Ascending aorta (tissue), 2 donors: ENCODE measurements at regions of chr13 and their contacts with region 1.

Region 1: DNA sequence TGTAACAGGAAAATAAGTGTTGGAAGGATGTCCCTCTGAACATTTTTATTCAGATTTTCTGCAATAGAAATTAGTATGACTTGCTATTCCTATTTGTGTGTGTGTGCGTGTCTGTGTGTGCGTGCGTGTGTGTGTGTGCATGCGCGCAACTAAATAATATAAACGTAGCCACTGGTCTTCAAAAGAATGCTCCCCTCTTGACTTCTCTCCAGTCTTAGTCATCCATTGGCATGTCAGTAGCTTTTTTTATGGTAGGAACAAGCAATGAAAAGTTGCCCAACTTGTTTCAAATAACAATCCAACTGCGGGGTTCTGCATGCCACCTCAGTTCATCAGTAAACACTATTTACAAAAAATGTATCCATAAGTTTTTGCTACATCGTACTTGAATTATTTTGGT is 249.6 kb downstream of the GPC6 start:
- DNase-seq: no peak
- H3K4me3 ChIP-seq: no peak overlapping the region
- H3K27ac ChIP-seq: no peak overlapping the region
- H3K4me1 ChIP-seq: peaks cover 0 to 3% of the 10 kb centered on the region in 2 donors
- H3K27me3 ChIP-seq: no peaks in the 10 kb centered on the region
- CTCF ChIP-seq: no peak

Region 2: GRCh38 chr13:93450191-93450621 is 26.0 kb before region 1 on chr13:
- intact Hi-C with region 1: no loop called
- DNase-seq: no peak
- H3K4me3 ChIP-seq: no peak overlapping the region
- H3K27ac ChIP-seq: no peak overlapping the region
- H3K4me1 ChIP-seq: no peaks in the 10 kb centered on the region
- H3K27me3 ChIP-seq: no peaks in the 10 kb centered on the region
- CTCF ChIP-seq: no peak

Region 3: GRCh38 chr13:93951153-93951552 is 475.0 kb after region 1 on chr13:
- intact Hi-C with region 1: loop called (anchors 10 kb)
- DNase-seq: no peak
- H3K4me3 ChIP-seq: no peak overlapping the region
- H3K27ac ChIP-seq: no peak overlapping the region
- H3K4me1 ChIP-seq: no peaks in the 10 kb centered on the region
- H3K27me3 ChIP-seq: no peaks in the 10 kb centered on the region
- CTCF ChIP-seq: peak in 1 of 3 experiments; percentile 10